ENCODE measurements at regions of chr16 and their contacts with region 1.

Region 1: DNA sequence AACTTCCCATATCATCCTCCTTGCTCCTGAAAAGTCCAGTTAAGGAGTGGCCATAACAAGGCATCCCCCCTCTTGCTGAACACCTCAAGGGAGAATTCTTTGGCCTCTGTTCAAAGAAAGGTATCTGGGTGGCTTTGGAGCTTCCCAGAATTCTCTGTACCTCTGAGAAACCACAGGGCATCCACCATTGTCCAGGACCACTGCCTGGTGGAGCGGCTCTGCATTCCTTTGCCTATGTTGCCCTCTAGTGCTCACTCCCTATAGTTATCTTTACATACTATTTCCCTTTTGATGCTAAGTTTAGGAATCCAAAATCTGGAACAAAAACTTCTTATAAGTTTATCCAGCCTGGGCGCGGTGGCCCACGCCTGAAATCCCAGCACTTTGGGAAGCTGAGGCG is 30.3 kb downstream of the CHD9NB start:
- DNase-seq: peak; percentile 70
- H3K4me3 ChIP-seq: no peak overlapping the region
- H3K27ac ChIP-seq: no peak overlapping the region
- H3K4me1 ChIP-seq: no peaks in the 10 kb centered on the region
- H3K27me3 ChIP-seq: no peaks in the 10 kb centered on the region
- CTCF ChIP-seq: peak; percentile 74
- EP300 ChIP-seq: no peak
- RAD21 ChIP-seq: peak; percentile 95

Region 2: DNA sequence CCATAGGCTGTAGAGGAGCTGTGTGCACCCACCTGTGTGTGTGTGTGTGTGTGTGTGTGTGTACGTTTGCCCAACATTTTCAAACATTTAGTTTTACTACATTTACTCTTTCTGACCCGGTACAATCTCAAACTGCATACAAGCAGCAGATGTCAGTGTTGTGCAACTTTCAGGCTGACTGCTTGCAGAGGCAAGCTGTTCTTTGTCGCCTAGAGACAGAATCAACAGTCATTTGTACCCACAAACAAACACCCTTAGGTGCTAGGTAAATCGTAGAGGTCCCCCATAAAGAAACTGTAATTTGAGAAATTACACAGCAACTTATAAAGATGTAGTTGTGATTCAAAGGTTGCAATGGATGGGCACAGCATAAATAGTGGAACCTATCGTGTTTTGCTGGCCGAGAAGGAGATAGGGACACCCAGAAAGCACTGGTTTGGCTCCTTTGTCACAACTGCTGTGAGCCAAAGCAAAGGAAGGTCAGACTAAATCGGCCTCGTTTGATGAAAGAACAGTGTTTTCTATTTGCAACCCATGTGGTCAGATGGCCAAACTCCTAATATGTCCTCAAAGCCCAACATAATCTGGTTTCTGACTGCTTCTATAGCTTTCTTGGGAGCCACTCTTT is 953.8 kb before region 1 on chr16:
- CTCF ChIA-PET with region 1: interaction called, 16 read pairs
- POLR2A ChIA-PET with region 1: no interaction called
- DNase-seq: peak; percentile 1
- H3K4me3 ChIP-seq: no peak overlapping the region
- H3K27ac ChIP-seq: no peak overlapping the region
- H3K4me1 ChIP-seq: no peaks in the 10 kb centered on the region
- H3K27me3 ChIP-seq: no peaks in the 10 kb centered on the region
- CTCF ChIP-seq: no peak
- EP300 ChIP-seq: no peak
- RAD21 ChIP-seq: peak; percentile 48

Region 3: GRCh38 chr16:52597580-52598483 is 424.5 kb before region 1 on chr16:
- CTCF ChIA-PET with region 1: no interaction called
- POLR2A ChIA-PET with region 1: no interaction called
- DNase-seq: no peak
- H3K4me3 ChIP-seq: no peak overlapping the region
- H3K27ac ChIP-seq: no peak overlapping the region
- H3K4me1 ChIP-seq: no peaks in the 10 kb centered on the region
- H3K27me3 ChIP-seq: no peaks in the 10 kb centered on the region
- CTCF ChIP-seq: no peak
- EP300 ChIP-seq: no peak
- RAD21 ChIP-seq: no peak

Region 4: DNA sequence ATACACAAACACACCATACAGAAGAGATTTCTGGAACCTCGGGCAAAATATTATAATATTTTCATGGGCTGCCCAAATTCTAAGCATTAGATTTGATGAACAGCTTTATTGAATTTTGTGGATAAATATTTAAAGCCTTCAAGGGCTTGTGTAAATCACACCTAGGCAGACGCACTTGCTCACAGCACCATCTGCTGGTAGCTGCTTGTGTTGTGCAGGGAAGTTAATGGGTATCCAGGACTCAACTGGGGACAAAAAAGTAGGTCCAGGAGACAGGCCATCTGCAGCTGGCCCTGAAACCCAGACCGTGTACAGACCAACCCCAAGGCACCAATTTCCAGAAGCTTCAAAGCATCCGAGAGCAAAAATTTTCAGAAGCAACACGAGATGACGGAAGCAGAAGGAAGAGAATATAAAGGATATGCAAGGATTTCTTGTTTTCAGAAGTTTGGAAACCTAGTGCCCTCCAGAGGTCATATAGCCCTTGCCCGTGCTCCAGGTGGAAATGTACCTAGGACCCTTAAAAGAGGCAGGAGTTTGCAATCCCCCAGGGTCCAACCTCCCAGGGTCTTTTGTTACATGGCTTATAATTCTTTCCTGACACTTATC is 109.7 kb before region 1 on chr16:
- CTCF ChIA-PET with region 1: interaction called, 32 read pairs
- POLR2A ChIA-PET with region 1: no interaction called
- DNase-seq: peak; percentile 55
- H3K4me3 ChIP-seq: peak overlapping the region in 1 of 2 experiments; percentile 50; a peak in 1 of 4 replicates
- H3K27ac ChIP-seq: no peak overlapping the region
- H3K4me1 ChIP-seq: no peaks in the 10 kb centered on the region
- H3K27me3 ChIP-seq: no peaks in the 10 kb centered on the region
- CTCF ChIP-seq: peak; percentile 74
- EP300 ChIP-seq: no peak
- RAD21 ChIP-seq: peak; percentile 78

Region 5: DNA sequence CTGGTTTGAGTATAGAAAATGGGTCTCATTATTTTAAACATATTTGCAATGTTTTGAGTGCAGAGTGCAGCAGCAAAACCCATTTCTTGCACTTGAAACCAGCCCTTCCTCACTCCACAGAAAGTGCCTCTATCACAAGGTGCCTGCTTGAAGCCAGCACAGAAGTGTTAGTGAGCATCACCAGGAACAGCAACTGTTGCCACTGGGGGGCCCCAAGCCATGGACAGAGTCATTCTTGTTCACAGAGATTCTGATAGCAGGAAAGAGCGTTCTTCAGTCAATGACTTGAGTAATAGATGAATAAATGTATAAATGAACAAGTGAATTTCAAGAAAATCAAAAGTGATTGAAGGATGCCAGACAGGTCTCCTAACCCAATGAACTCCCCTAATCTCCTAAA is 15.3 kb before region 1 on chr16:
- CTCF ChIA-PET with region 1: interaction called, 42 read pairs
- POLR2A ChIA-PET with region 1: no interaction called
- DNase-seq: no peak
- H3K4me3 ChIP-seq: no peak overlapping the region
- H3K27ac ChIP-seq: no peak overlapping the region
- H3K4me1 ChIP-seq: no peaks in the 10 kb centered on the region
- H3K27me3 ChIP-seq: no peaks in the 10 kb centered on the region
- CTCF ChIP-seq: no peak
- EP300 ChIP-seq: no peak
- RAD21 ChIP-seq: no peak

Region 6: DNA sequence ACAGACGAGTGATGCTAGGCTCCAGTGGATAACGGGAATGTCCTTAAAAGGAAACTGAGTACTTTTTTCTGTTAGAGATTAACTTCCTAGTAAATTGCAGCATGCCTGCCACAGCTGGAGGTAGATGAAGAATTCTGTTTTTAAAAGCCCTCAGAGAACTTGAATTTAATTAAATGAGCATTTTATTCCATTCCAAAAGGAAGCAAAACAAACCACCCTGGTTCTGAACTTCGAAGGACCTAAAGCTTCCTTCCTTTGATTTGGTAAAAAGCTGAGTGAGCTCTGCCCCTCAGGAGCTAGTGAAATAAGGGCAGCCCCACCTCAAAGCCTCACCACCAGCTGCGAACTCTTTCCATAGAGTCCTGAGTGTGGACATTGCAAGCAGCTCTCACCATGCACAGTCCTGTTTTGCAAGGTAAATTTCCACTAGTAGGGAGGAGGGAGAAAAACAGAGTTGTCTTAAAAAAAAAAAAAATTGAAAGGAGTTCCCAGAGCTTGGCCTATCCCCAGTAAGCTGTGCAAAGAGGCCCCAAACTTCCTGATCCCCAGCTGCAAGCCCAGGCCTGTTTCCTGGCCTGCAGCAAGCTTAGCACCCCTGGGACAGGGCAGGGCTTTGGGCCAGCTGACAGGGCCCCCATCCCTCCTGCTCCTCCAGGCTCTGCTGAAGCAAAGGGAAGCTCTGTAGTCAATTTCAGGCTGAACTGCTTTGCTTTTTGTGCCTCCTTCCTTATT is 19.1 kb after region 1 on chr16:
- CTCF ChIA-PET with region 1: interaction called, 12 read pairs
- POLR2A ChIA-PET with region 1: no interaction called
- DNase-seq: no peak
- H3K4me3 ChIP-seq: no peak overlapping the region
- H3K27ac ChIP-seq: no peak overlapping the region; a peak in 1 of 4 replicates
- H3K4me1 ChIP-seq: peaks cover 0 to 9% of the 10 kb centered on the region in 2 experiments; a peak in 2 of 4 replicates
- H3K27me3 ChIP-seq: no peaks in the 10 kb centered on the region
- CTCF ChIP-seq: no peak
- EP300 ChIP-seq: no peak
- RAD21 ChIP-seq: no peak

Region 7: GRCh38 chr16:53982631-53983042 is 960.3 kb after region 1 on chr16:
- CTCF ChIA-PET with region 1: no interaction called
- POLR2A ChIA-PET with region 1: no interaction called
- DNase-seq: no peak
- H3K4me3 ChIP-seq: no peak overlapping the region
- H3K27ac ChIP-seq: no peak overlapping the region
- H3K4me1 ChIP-seq: peaks cover 0 to 5% of the 10 kb centered on the region in 2 experiments; a peak in 2 of 4 replicates
- H3K27me3 ChIP-seq: no peaks in the 10 kb centered on the region
- CTCF ChIP-seq: no peak
- EP300 ChIP-seq: no peak
- RAD21 ChIP-seq: no peak

Measured in SK-N-SH (cell line).